ENCODE measurements at regions of chr1 and their contacts with region 1.

Region 1: DNA sequence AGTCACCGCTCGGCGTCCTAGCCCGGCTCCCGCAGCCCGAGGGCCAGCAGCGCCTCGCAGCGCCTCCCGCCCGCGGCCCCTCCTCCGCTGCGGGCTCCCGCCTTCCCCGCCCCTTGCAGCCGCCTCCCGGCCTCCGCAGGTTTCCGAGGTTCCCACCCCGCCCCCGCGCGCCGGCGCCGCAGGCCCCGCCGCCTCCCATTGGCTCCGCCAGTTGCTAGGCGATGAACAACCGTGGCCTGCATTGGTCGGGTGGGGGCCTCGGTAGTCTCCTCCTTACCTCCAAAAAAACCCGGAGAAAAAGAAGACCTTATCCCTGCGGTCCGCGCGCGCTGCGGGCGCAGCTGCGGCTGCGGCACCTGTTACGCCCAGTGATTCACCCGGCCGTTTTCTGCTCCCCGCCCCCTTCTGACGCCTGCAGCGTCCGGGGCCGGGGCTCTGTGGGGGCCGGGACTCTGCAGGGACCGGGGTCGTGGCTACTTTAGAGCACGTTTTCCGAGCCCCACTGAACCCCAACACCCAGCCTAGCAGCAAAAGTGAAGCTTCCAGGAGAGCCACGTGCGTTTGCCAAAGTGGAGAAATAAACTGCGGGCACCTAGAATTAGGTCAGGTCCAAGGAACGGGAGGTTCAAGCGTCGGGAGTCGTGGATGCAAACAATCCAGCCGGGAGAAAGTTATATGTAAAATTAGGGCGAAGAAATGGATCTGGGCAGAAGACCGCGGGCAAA is at the start of gene SSX2IP:
- DNase-seq: peak; percentile 98 to 100 (median 99)
- ATAC-seq: peak; percentile 81
- H3K4me3 ChIP-seq: peak within 1 kb of the TSS; percentile 83 to 87
- H3K4me3 Mint-ChIP-seq: peak within 1 kb of the TSS; percentile 87
- H3K27ac ChIP-seq: peak within 1 kb of the TSS; percentile 85 to 88
- H3K27ac Mint-ChIP-seq: peak within 1 kb of the TSS; percentile 97
- H3K4me1 ChIP-seq: peaks cover 38% of the 10 kb centered on the region
- H3K4me1 Mint-ChIP-seq: peaks cover 59% of the 10 kb centered on the region
- H3K27me3 ChIP-seq: no peaks in the 10 kb centered on the region
- H3K27me3 Mint-ChIP-seq: no peaks in the 10 kb centered on the region
- CTCF ChIP-seq: no peak
- total RNA-seq, gene SSX2IP: 11.4 to 12.3 TPM

Region 2: DNA sequence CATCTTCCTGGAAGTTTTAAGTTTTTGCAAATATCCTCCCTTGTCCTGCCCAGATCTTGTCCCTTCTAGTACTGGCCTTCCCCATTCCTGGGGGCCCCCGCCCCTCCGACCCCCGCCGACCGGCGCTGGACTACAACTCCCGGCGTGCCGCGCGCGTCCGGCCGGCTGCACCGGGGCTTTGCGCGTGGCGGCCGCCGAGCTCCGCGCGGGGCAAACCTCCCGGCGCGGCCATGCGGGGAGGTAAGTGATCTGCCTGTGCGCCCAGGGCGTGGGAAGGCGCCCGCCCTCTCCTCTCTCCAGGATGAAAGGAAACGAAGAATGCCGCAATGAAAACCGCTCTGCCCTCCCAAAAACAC is 392.3 kb before region 1 on chr1:
- CTCF ChIA-PET with region 1: no interaction called
- POLR2A ChIA-PET with region 1: no interaction called
- intact Hi-C with region 1: loop called (anchors 5 kb)
- DNase-seq: peak; percentile 12 to 75 (median 41)
- ATAC-seq: peak; percentile 70
- H3K4me3 ChIP-seq: peak overlapping the region; percentile 76 to 94
- H3K4me3 Mint-ChIP-seq: peak overlapping the region; percentile 78
- H3K27ac ChIP-seq: peak overlapping the region; percentile 8 to 53
- H3K27ac Mint-ChIP-seq: peak overlapping the region; percentile 46
- H3K4me1 ChIP-seq: peaks cover 17% of the 10 kb centered on the region
- H3K4me1 Mint-ChIP-seq: peaks cover 37% of the 10 kb centered on the region
- H3K27me3 ChIP-seq: no peaks in the 10 kb centered on the region
- H3K27me3 Mint-ChIP-seq: peaks cover 5% of the 10 kb centered on the region
- CTCF ChIP-seq: no peak

Region 3: GRCh38 chr1:84506002-84506728 is 184.4 kb before region 1 on chr1 and contains the starts of genes GNG5 and SPATA1:
- CTCF ChIA-PET with region 1: interaction called, 3 read pairs
- POLR2A ChIA-PET with region 1: interaction called, 3 read pairs
- intact Hi-C with region 1: loop called (anchors 1 to 2 kb)
- DNase-seq: peak; percentile 91 to 98 (median 98)
- ATAC-seq: peak; percentile 89
- H3K4me3 ChIP-seq: peak within 1 kb of the TSS; percentile 87 to 95
- H3K4me3 Mint-ChIP-seq: peak within 1 kb of the TSS; percentile 94
- H3K27ac ChIP-seq: peak within 1 kb of the TSS; percentile 75 to 88
- H3K27ac Mint-ChIP-seq: peak within 1 kb of the TSS; percentile 96
- H3K4me1 ChIP-seq: peaks cover 40% of the 10 kb centered on the region
- H3K4me1 Mint-ChIP-seq: peaks cover 45% of the 10 kb centered on the region
- H3K27me3 ChIP-seq: no peaks in the 10 kb centered on the region
- H3K27me3 Mint-ChIP-seq: no peaks in the 10 kb centered on the region
- CTCF ChIP-seq: no peak
- total RNA-seq, gene GNG5: 19.5 TPM
- total RNA-seq, gene SPATA1: 0.52 to 0.94 TPM

Region 4: DNA sequence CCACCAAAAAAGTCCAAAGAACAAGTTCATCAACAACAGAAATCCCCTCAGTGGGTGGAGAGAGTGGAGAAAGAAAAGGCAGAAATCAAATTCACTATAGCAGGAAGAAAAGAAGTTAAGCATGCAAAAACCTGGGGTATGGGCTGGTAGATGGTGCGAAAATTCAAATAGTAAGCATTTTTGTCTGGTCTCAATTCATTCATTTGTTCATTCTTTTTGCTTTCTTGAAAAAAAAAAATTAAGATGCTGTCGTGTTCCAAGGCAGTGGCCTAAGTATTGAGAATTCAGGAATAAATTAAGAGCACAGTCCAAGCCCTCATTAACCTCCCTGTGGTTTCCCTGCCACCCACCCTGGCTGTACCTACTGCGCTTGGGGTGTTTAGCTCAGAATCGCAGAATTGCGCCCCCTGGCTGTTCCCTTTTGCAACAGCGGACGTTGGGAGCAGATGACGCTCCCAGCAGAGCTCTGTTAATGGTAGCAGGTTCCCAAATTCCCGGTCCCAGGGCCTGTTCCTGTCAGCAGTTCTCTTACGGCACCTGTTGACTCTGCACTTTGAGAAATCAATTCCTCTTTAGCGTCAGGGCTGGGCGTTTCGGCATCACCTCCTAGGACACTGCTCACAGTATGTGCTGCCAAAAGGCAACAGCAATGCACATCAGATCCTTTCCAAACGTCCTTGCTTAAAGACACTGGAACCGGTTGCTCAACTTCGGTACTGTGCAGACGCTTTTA is 33.7 kb after region 1 on chr1:
- CTCF ChIA-PET with region 1: interaction called, 3 read pairs
- POLR2A ChIA-PET with region 1: interaction called, 3 read pairs
- intact Hi-C with region 1: loop called in 1 of 2 experiments (anchors 5 kb)
- DNase-seq: peak; percentile 10 to 67 (median 57)
- ATAC-seq: peak; percentile 67
- H3K4me3 ChIP-seq: no peak overlapping the region
- H3K4me3 Mint-ChIP-seq: no peak overlapping the region
- H3K27ac ChIP-seq: no peak overlapping the region
- H3K27ac Mint-ChIP-seq: no peak overlapping the region
- H3K4me1 ChIP-seq: no peaks in the 10 kb centered on the region
- H3K4me1 Mint-ChIP-seq: no peaks in the 10 kb centered on the region
- H3K27me3 ChIP-seq: no peaks in the 10 kb centered on the region
- H3K27me3 Mint-ChIP-seq: peaks cover 2% of the 10 kb centered on the region
- CTCF ChIP-seq: peak; percentile 49

Region 5: GRCh38 chr1:85048296-85049064 is 357.9 kb after region 1 on chr1 and contains the start of gene MCOLN3:
- CTCF ChIA-PET with region 1: no interaction called
- POLR2A ChIA-PET with region 1: no interaction called
- intact Hi-C with region 1: loop called in 1 of 2 experiments (anchors 10 kb)
- DNase-seq: peak in 7 of 9 experiments; percentile 23 to 57 (median 34)
- ATAC-seq: peak; percentile 66
- H3K4me3 ChIP-seq: peak within 1 kb of the TSS; percentile 41 to 50
- H3K4me3 Mint-ChIP-seq: peak within 1 kb of the TSS; percentile 80
- H3K27ac ChIP-seq: no peak within 1 kb of the TSS
- H3K27ac Mint-ChIP-seq: no peak within 1 kb of the TSS
- H3K4me1 ChIP-seq: peaks cover 21% of the 10 kb centered on the region
- H3K4me1 Mint-ChIP-seq: peaks cover 31% of the 10 kb centered on the region
- H3K27me3 ChIP-seq: peaks cover 12 to 27% of the 10 kb centered on the region in 2 experiments
- H3K27me3 Mint-ChIP-seq: peaks cover 40% of the 10 kb centered on the region
- CTCF ChIP-seq: no peak
- total RNA-seq, gene MCOLN3: 0.11 to 0.14 TPM

Region 6: GRCh38 chr1:85707990-85708828 is 1017.6 kb after region 1 on chr1 and contains the start of gene ZNHIT6:
- CTCF ChIA-PET with region 1: no interaction called
- POLR2A ChIA-PET with region 1: no interaction called
- intact Hi-C with region 1: loop called in 1 of 2 experiments (anchors 10 kb)
- DNase-seq: peak; percentile 72 to 95 (median 84)
- ATAC-seq: peak; percentile 95
- H3K4me3 ChIP-seq: peak within 1 kb of the TSS; percentile 89 to 93
- H3K4me3 Mint-ChIP-seq: no peak within 1 kb of the TSS
- H3K27ac ChIP-seq: peak within 1 kb of the TSS; percentile 67 to 79
- H3K27ac Mint-ChIP-seq: no peak within 1 kb of the TSS
- H3K4me1 ChIP-seq: peaks cover 17% of the 10 kb centered on the region
- H3K4me1 Mint-ChIP-seq: peaks cover 30% of the 10 kb centered on the region
- H3K27me3 ChIP-seq: no peaks in the 10 kb centered on the region
- H3K27me3 Mint-ChIP-seq: no peaks in the 10 kb centered on the region
- CTCF ChIP-seq: no peak
- total RNA-seq, gene ZNHIT6: 14.4 to 15.3 TPM